ENCODE measurements at regions of chr11 and their contacts with region 1.

Region 1: DNA sequence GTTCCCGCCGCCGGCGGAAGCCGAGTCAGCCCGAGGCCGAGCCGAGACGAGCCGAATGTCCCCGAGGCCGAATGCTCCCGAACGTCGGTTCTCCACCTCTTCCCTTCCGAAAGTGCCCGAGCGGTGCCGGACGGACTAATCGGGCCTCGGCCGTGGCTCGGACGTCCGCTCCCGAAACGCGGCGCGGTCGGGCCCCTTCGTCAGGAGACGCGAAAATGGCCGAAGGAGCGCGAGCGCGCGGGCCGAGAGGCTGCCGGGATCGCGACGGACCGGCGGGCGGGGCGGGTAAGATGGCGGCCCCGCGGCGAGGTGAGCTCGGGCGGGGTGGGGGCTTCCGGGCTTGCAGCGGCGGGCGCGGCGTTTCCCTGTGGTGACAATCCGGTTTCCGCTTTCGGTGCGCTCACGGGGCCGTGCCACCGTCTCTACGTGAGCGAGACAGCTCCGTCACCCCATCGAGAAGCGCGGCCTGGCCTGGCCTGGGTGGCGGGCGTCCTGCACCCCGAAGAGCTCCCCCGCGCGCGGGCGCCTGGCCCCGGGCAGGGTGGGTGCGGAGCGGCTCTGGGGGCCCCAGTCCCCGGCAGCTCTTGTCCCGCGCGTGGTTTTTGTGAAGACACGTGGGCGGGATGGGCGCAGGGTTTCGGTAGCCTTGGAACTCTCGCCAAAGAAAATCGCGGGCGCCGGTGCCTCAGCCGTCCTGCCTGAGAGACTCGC is at the start of gene TMEM80:
- DNase-seq: peak; percentile 98 to 99
- H3K4me3 ChIP-seq: peak within 1 kb of the TSS; percentile 97
- H3K4me3 Mint-ChIP-seq: peak within 1 kb of the TSS; percentile 86
- H3K27ac Mint-ChIP-seq: peak within 1 kb of the TSS; percentile 97
- H3K4me1 ChIP-seq: peaks cover 10% of the 10 kb centered on the region
- H3K4me1 Mint-ChIP-seq: peaks cover 15% of the 10 kb centered on the region
- H3K27me3 ChIP-seq: no peaks in the 10 kb centered on the region
- H3K27me3 Mint-ChIP-seq: no peaks in the 10 kb centered on the region
- CTCF ChIP-seq: no peak
- total RNA-seq, gene TMEM80: 70.3 and 74.7 TPM in 2 replicates

Region 2: GRCh38 chr11:568306-569157 is 127.2 kb before region 1 on chr11:
- CTCF ChIA-PET with region 1: no interaction called
- POLR2A ChIA-PET with region 1: interaction called, 5 read pairs
- intact Hi-C with region 1: loop called (anchors 10 kb)
- DNase-seq: peak; percentile 95 to 99
- H3K4me3 ChIP-seq: peak overlapping the region; percentile 99
- H3K4me3 Mint-ChIP-seq: peak overlapping the region; percentile 74
- H3K27ac Mint-ChIP-seq: no peak overlapping the region
- H3K4me1 ChIP-seq: peaks cover 54% of the 10 kb centered on the region
- H3K4me1 Mint-ChIP-seq: peaks cover 6% of the 10 kb centered on the region
- H3K27me3 ChIP-seq: no peaks in the 10 kb centered on the region
- H3K27me3 Mint-ChIP-seq: no peaks in the 10 kb centered on the region
- CTCF ChIP-seq: no peak

Region 3: DNA sequence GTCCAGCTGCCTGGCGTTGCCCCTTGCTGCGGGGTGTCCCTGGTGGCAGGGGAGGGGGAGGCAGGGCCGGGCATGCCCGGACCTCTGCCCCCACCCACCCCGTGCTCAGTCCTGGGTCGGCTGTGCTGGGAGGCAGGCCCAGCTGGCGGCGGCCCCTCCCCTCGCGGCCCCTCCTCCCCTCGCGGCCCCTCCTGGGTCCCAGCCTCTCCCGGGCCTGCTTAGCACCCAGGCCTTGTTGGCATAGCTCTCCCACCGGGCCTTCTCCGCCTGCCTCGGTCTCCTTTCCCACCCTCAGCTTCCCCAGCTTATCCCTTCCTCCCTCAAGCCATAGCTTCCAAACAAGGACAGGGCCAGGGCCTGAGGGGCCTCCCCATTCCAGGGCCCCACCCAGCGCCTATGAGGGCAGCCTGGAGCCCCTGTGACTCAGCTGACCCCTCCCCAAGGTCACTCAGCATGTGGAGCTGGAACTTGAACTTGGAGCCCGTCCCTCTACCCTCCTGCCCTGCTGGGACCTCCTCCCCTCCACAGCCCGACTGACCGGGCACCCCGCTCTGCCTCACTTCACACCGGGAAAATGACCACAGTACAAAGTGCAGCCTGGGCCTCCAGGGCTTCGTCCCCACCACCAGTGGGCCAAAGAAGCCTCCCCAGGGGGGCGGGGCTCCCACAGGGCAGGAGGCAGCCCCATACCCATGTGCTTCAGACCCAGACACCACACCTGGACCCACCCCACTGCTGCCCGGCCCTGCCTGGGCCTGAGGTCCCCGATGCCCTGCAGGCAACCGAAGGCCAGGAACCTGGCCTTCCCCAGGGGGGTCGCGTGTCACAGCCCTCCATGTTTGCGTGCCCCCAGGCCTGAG is 11.5 kb after region 1 on chr11:
- CTCF ChIA-PET with region 1: interaction called, 10 read pairs
- POLR2A ChIA-PET with region 1: interaction called, 32 read pairs
- intact Hi-C with region 1: no loop called
- DNase-seq: peak; percentile 82 to 87
- H3K4me3 ChIP-seq: peak overlapping the region; percentile 80
- H3K4me3 Mint-ChIP-seq: peak overlapping the region; percentile 86
- H3K27ac Mint-ChIP-seq: peak overlapping the region; percentile 90
- H3K4me1 ChIP-seq: peaks cover 56% of the 10 kb centered on the region
- H3K4me1 Mint-ChIP-seq: peaks cover 13% of the 10 kb centered on the region
- H3K27me3 ChIP-seq: no peaks in the 10 kb centered on the region
- H3K27me3 Mint-ChIP-seq: no peaks in the 10 kb centered on the region
- CTCF ChIP-seq: peak in 1 of 2 experiments; percentile 63

Region 4: GRCh38 chr11:765025-765801 is 69.5 kb after region 1 on chr11:
- CTCF ChIA-PET with region 1: no interaction called
- POLR2A ChIA-PET with region 1: interaction called, 11 read pairs
- intact Hi-C with region 1: no loop called
- DNase-seq: peak; percentile 74 to 78
- H3K4me3 ChIP-seq: no peak overlapping the region
- H3K4me3 Mint-ChIP-seq: no peak overlapping the region
- H3K27ac Mint-ChIP-seq: peak overlapping the region; percentile 48
- H3K4me1 ChIP-seq: no peaks in the 10 kb centered on the region
- H3K4me1 Mint-ChIP-seq: no peaks in the 10 kb centered on the region
- H3K27me3 ChIP-seq: no peaks in the 10 kb centered on the region
- H3K27me3 Mint-ChIP-seq: no peaks in the 10 kb centered on the region
- CTCF ChIP-seq: peak; percentile 63 to 66

Measured in Caco-2 (cell line).